ENCODE measurements at regions of chr19 and their contacts with region 1.

Region 1: GRCh38 chr19:10717356-10718204 is at the start of gene DNM2:
- DNase-seq: peak; percentile 99
- H3K4me3 Mint-ChIP-seq: peak within 1 kb of the TSS; percentile 98
- H3K27ac Mint-ChIP-seq: peak within 1 kb of the TSS; percentile 88
- H3K4me1 Mint-ChIP-seq: peaks cover 29% of the 10 kb centered on the region
- H3K27me3 Mint-ChIP-seq: no peaks in the 10 kb centered on the region
- total RNA-seq, gene DNM2: 236 and 240 TPM in 2 replicates

Region 2: DNA sequence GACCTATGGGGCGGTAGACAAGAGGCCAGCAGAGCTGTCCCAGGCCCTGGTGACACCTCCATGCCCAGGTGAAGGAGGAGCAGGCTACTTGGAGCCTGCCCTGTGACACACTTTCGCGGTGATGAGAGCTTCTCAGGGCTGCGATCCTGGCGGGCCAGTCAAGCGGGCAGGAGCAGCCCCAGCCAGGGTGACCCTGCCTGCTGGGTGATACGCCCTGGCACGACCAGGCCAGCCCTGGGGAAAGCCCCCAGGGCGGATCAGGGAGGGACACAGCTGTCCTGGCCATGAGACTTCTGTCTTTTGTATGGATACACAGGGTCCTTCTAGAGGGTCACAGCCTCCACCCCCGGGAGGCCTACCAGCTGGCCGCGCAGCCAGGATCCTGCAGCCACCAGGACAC is 13.3 kb after region 1 on chr19:
- intact Hi-C with region 1: loop called (anchors 1 kb)
- DNase-seq: no peak
- H3K4me3 Mint-ChIP-seq: no peak overlapping the region
- H3K27ac Mint-ChIP-seq: peak overlapping the region; percentile 89
- H3K4me1 Mint-ChIP-seq: peaks cover 36% of the 10 kb centered on the region
- H3K27me3 Mint-ChIP-seq: no peaks in the 10 kb centered on the region

Region 3: DNA sequence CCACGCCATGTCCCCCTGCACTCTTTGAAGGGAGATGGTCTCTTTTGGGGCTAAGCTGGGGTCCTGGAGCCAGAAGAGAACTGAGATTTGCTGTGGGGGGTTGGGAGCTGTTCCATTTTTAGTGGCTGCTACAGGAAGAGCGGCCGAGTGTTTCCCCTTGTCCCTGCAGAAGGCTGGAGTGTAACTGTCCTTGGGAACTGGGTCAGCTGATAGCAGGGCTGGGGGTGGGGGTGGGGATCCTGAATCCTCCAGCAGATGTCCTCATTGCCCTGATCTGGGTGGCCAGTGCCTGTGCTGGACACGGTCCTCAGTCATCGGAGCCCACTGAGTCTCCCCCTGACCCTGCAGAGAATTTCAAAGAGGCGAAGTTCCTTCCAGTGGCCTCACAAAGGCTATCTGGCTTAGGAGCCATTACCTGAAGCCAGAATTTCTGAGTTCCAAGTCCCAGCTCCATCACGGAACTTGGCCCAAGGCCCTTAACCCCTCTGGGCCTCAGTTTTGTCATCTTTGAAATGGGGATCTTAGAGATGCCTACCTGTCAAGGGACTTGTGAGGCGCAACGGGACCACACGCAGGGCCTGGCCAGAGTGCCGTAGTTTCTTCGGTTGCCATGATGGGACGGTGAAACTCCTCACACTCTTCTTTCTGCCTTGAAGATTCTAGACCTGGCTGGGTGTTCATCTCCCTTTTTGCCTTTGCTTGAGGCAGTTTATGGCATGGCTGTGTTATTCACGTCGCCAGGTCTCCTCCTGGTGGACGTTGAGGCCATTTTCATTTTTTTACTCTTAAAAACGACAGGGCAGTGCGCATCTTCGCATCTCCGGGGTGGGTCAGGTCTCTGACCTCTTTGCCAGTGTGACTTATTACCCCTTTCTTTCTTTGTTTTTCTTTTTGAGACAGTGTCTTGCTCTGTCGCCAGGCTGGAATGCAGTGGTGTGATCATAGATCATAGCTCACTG is 52.2 kb after region 1 on chr19:
- intact Hi-C with region 1: loop called (anchors 1 kb)
- DNase-seq: no peak
- H3K4me3 Mint-ChIP-seq: no peak overlapping the region
- H3K27ac Mint-ChIP-seq: peak overlapping the region; percentile 75
- H3K4me1 Mint-ChIP-seq: peaks cover 45% of the 10 kb centered on the region
- H3K27me3 Mint-ChIP-seq: no peaks in the 10 kb centered on the region

Region 4: DNA sequence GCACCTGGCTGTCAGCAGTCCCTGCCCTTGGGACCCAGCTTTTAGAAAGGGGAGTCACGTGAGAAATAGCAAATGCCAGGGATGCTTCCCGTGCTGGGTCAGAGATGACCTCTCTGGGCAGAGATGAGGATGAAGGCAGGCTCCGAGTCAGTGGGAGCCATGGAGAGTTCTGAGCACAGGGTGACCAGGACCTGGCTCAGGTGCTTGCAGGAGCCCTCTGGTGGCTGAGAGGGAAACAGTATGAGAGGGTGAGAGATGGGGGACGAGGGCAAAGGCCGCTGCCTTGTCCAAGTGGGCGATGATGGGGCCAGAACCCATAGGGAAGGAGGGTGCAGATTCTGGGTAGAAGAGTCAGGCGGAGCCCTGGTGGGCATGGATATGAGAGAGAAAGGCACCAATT is 102.6 kb after region 1 on chr19:
- intact Hi-C with region 1: loop called (anchors 1 kb)
- DNase-seq: no peak
- H3K4me3 Mint-ChIP-seq: no peak overlapping the region
- H3K27ac Mint-ChIP-seq: peak overlapping the region; percentile 29
- H3K4me1 Mint-ChIP-seq: peaks cover 11% of the 10 kb centered on the region
- H3K27me3 Mint-ChIP-seq: no peaks in the 10 kb centered on the region

Region 5: DNA sequence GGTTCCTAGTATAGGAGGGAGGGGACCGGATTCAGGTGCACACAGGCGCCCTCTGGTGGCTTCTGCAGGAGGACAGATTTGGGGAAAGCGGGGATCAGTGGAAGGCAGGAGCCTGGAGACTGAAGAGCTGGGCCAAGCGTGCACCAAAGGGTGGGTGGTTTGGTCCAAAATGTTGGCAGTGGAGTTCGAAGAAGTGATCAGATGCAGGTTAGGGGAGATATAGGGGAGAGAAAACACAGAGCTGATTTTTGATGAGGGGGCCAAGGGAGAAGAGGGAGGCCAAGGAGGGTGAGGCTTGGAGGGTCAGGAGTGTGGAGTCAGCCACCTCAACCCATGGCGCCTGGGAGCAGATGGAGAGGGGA is 146.9 kb after region 1 on chr19:
- intact Hi-C with region 1: loop called (anchors 1 kb)
- DNase-seq: peak; percentile 68
- H3K4me3 Mint-ChIP-seq: no peak overlapping the region
- H3K27ac Mint-ChIP-seq: peak overlapping the region; percentile 46
- H3K4me1 Mint-ChIP-seq: peaks cover 30% of the 10 kb centered on the region
- H3K27me3 Mint-ChIP-seq: no peaks in the 10 kb centered on the region